Activated T-helper 1 cell treated with anti-CD3 and anti-CD28 coated beads, Interleukin-12 subunit alpha, Interleukin-12 subunit beta, Interleukin-2, Interleukin-4 antibody, amounts not matched to agents 30 ng/mL and 10 ng/mL and 1 ng/mL, durations not matched to agents 14 hours and 24 hours and 36 hours (primary cell): ENCODE measurements at regions of chr10 and their contacts with region 1.

Region 1: DNA sequence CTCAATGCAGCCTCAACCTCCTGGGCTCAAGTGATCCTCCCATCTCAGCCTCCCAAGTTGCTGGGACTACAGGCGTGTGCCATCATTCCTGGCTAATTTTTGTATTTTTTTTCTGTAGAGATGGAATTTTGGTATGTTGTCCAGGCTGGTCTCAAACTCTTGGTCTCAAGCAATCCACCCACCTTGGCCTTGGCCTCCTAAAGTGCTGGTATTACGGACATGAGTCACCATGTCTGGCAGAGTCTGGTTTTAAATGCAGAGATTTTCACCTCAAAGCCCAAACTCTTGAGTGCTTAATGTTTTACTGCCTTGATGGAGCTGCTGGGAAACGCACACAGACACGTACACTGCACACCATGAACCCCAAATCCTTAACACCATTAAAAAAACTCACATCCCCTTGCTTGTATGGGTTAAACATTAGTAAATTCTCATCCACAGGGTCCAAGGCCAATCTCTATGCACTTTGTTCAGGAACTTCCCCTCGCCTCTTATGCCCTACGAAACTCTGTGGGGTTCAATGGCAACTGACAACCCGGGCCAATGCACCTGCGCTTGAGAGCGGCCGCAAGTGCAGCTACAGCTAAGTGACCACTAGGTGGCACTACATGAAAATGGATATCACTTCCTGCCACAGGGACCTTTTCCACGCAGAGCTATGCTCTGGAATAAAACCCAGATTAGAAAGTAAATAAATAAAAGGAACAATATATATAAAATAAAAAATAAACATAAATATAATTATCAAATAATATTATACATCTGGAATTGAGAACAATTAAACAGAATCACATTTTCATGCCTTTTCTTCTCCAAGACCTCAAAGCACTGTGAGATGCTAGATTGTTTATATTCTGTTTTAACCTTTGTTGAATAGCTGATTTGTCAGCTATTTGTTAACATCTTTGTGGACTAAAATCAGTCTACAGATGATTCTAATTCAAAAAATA is 66.9 kb upstream of the AFAP1L2 start:
- DNase-seq: peak; percentile 54
- H3K4me3 Mint-ChIP-seq: no peak overlapping the region
- H3K27ac Mint-ChIP-seq: no peak overlapping the region
- H3K4me1 Mint-ChIP-seq: peaks cover 31% of the 10 kb centered on the region
- H3K27me3 Mint-ChIP-seq: no peaks in the 10 kb centered on the region

Region 2: DNA sequence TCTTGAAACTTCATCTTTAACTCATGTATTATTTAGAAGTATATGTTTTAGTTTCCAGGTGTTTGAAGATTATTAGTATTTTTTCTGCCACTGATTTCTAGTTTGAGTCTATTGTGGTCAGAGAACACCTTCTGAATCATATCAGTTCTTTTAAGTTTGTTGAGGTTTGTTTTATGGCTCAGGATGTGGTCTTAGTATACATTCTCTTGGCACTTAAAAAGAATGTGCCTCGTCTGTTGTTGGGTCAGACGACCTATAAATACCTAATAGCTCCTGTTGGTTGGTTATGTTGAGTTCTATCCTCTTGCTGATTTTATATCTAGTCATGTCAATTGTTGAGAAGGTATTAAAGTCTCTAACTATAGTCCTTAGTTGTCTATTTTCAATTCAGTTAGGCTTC is 276.2 kb before region 1 on chr10:
- intact Hi-C with region 1: no loop called
- DNase-seq: no peak
- H3K4me3 Mint-ChIP-seq: no peak overlapping the region
- H3K27ac Mint-ChIP-seq: no peak overlapping the region
- H3K4me1 Mint-ChIP-seq: peaks cover 13% of the 10 kb centered on the region
- H3K27me3 Mint-ChIP-seq: peaks cover 51% of the 10 kb centered on the region

Region 3: DNA sequence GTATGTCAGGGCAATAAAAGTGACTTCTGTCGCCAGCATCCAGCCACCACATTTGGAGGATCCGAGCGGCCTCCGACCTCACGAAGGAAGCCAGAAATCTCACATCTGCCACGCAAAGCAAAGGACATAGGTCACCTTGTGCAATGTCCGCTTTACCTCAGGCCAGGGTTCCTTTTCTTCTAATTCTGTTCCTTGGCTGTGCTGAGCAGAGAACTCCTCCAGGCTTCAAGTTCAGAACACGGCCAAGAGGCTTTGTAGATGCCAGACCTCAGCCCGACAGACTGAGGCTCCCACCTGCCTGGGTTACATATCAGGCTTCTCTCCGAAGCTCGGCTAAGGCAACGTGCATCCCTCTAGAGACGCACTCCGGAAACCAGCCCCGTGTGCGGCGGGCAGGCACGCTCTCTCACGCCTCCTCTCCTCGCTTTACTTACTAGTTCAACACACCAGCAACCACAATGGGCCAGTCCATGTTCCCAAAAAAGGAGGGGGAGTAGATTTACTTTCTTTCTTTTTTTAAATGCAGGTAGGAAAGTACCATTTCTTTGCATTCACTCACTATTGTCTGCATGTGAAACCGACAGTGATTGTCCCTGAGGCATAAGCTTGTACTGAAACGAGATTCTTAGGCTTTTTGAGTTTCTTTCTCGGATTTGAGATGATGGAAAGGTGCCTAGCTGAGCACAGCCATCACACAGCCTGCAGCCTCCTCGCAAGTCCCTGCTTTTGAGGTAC is 55.4 kb after region 1 on chr10:
- intact Hi-C with region 1: loop called (anchors 1 kb)
- DNase-seq: peak; percentile 82
- H3K4me3 Mint-ChIP-seq: peak overlapping the region; percentile 87
- H3K27ac Mint-ChIP-seq: peak overlapping the region; percentile 92
- H3K4me1 Mint-ChIP-seq: peaks cover 58% of the 10 kb centered on the region
- H3K27me3 Mint-ChIP-seq: peaks cover 2% of the 10 kb centered on the region

Region 4: GRCh38 chr10:114550756-114551635 is 79.8 kb after region 1 on chr10:
- intact Hi-C with region 1: loop called (anchors 1 kb)
- DNase-seq: no peak
- H3K4me3 Mint-ChIP-seq: no peak overlapping the region
- H3K27ac Mint-ChIP-seq: no peak overlapping the region
- H3K4me1 Mint-ChIP-seq: peaks cover 21% of the 10 kb centered on the region
- H3K27me3 Mint-ChIP-seq: no peaks in the 10 kb centered on the region

Region 5: DNA sequence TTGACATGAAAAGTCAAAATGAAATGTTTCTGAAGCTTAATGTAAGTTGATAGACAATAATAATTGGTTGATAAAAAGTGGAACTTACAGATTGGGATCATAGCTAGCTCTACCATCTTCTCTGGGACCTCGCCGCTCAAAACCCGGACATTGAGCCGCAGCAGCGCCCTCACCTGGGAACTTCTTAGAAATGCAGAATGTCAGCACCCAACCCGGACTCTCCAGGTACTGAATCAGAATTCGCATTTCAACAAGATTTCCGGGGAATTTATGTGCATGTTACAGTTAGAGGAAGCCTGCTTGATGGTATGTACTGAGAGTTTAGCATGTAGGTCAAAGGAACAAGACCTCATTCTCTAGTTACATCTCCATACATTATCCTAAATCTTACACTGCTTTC is 223.5 kb after region 1 on chr10:
- intact Hi-C with region 1: loop called (anchors 2 kb)
- DNase-seq: no peak
- H3K4me3 Mint-ChIP-seq: no peak overlapping the region
- H3K27ac Mint-ChIP-seq: no peak overlapping the region
- H3K4me1 Mint-ChIP-seq: peaks cover 7% of the 10 kb centered on the region
- H3K27me3 Mint-ChIP-seq: peaks cover 28% of the 10 kb centered on the region

Region 6: GRCh38 chr10:114783686-114784085 is 312.5 kb after region 1 on chr10:
- intact Hi-C with region 1: loop called (anchors 1 kb)
- DNase-seq: no peak
- H3K4me3 Mint-ChIP-seq: no peak overlapping the region
- H3K27ac Mint-ChIP-seq: no peak overlapping the region
- H3K4me1 Mint-ChIP-seq: peaks cover 14% of the 10 kb centered on the region
- H3K27me3 Mint-ChIP-seq: no peaks in the 10 kb centered on the region

Region 7: DNA sequence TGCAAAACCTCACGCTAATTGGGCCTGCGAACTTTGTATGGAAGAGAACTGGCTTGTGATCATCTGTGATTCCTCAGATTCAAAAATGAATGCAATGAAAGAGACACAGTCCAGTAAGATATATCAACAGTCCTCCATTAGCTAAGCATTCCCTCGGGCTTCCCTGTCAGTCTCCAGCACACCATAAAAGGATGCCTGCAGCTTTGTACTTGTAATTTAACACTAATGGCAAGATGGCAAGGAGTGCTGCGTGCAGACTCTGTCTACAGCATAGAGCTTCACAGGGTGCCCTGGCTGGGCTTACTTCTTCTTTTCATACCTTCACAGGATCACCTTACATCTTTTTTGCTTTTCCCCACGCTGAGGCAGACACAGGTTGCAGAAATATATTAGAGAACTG is 1601.8 kb after region 1 on chr10:
- intact Hi-C with region 1: no loop called
- DNase-seq: no peak
- H3K4me3 Mint-ChIP-seq: no peak overlapping the region
- H3K27ac Mint-ChIP-seq: no peak overlapping the region
- H3K4me1 Mint-ChIP-seq: no peaks in the 10 kb centered on the region
- H3K27me3 Mint-ChIP-seq: no peaks in the 10 kb centered on the region